CD4-positive, alpha-beta memory T cell (primary cell): ENCODE measurements at regions of chr1 and their contacts with region 1.

Region 1: DNA sequence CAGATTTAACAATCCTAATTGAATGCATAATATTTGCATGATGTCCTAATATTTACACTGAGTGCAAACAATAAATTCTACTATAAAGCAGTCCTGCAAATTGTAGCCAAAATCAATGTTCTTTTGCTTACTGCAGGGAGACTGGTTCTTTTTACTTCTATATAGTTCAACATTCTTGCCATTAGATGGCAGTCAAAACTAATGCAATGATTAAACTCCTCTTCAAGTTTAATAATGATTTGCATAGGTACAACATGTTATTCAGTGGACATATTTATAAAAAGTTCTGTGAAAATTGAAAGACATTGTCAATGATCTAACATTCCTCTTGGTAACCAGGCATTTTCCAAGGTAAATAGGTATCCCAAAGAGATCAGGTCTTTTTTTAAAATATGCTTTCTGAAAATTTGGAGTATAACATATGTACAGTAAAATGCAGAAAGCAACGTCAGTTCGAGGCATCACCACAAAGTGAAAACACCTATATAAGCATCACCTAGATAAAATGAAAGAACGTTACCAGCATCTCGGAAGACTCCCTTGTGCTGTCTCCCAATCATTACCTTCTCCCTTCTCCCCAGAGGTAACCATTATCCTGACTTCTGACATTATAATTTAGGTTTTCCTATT is 9.8 kb upstream of the FNBP1L start:
- DNase-seq: peak in 4 of 5 donors; percentile 33 to 44 (median 40)
- H3K4me3 ChIP-seq: no peak overlapping the region
- H3K4me3 Mint-ChIP-seq: peak overlapping the region in 1 of 8 donors; percentile 15
- H3K27ac ChIP-seq: no peak overlapping the region
- H3K27ac Mint-ChIP-seq: no peak overlapping the region
- H3K4me1 ChIP-seq: no peaks in the 10 kb centered on the region
- H3K4me1 Mint-ChIP-seq: peaks cover 0 to 7% (median 3%) of the 10 kb centered on the region in 4 donors
- H3K27me3 ChIP-seq: no peaks in the 10 kb centered on the region
- H3K27me3 Mint-ChIP-seq: peaks cover 4 to 7% of the 10 kb centered on the region in 2 donors

Region 2: DNA sequence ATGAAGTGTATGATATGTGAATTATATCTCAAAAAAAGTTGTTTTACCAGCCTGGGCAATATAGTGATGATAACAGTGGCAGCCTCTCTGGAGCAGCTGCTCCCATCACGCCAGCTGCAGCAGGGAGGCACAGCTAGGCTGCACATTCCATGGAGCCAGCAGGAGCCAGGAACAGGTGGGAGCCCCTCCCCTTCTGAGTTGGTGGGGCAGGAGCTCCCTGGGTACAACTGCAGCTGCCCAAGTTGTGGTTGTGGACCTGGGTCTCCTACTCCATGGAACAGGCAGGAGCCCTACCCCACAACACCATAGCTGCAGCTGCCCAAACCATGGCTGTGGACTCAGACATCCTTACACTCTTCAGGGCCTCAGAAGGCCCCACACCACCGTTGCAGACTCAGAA is 11.9 kb before region 1 on chr1:
- CTCF ChIA-PET with region 1: interaction called, 10 read pairs
- POLR2A ChIA-PET with region 1: no interaction called
- intact Hi-C with region 1: no loop called
- DNase-seq: no peak
- H3K4me3 ChIP-seq: no peak overlapping the region
- H3K4me3 Mint-ChIP-seq: no peak overlapping the region
- H3K27ac ChIP-seq: no peak overlapping the region
- H3K27ac Mint-ChIP-seq: no peak overlapping the region
- H3K4me1 ChIP-seq: no peaks in the 10 kb centered on the region
- H3K4me1 Mint-ChIP-seq: no peaks in the 10 kb centered on the region
- H3K27me3 ChIP-seq: no peaks in the 10 kb centered on the region
- H3K27me3 Mint-ChIP-seq: no peaks in the 10 kb centered on the region

Region 3: DNA sequence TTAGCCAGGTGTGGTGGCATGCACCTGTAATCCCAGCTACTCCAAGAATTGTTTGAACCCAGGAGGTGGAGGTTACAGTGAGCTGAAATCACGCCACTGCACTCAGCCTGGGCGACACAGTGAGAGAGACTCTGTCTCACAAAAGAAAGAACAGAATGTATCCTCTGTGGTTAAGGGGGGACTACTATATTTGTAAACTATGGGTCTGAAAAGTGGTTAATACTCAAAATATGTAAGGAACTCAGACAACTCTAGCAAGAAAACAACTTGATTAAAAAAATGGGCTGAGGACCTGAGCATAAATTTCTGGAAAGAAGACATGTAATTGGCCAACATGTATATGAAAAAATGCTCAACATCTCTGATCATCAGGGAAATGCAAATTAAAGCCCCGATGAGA is 21.0 kb after region 1 on chr1:
- CTCF ChIA-PET with region 1: no interaction called
- POLR2A ChIA-PET with region 1: no interaction called
- intact Hi-C with region 1: no loop called
- DNase-seq: no peak
- H3K4me3 ChIP-seq: no peak overlapping the region
- H3K4me3 Mint-ChIP-seq: no peak overlapping the region
- H3K27ac ChIP-seq: no peak overlapping the region
- H3K27ac Mint-ChIP-seq: no peak overlapping the region
- H3K4me1 ChIP-seq: no peaks in the 10 kb centered on the region
- H3K4me1 Mint-ChIP-seq: no peaks in the 10 kb centered on the region
- H3K27me3 ChIP-seq: no peaks in the 10 kb centered on the region
- H3K27me3 Mint-ChIP-seq: peaks cover 4 to 7% of the 10 kb centered on the region in 2 donors

Region 4: DNA sequence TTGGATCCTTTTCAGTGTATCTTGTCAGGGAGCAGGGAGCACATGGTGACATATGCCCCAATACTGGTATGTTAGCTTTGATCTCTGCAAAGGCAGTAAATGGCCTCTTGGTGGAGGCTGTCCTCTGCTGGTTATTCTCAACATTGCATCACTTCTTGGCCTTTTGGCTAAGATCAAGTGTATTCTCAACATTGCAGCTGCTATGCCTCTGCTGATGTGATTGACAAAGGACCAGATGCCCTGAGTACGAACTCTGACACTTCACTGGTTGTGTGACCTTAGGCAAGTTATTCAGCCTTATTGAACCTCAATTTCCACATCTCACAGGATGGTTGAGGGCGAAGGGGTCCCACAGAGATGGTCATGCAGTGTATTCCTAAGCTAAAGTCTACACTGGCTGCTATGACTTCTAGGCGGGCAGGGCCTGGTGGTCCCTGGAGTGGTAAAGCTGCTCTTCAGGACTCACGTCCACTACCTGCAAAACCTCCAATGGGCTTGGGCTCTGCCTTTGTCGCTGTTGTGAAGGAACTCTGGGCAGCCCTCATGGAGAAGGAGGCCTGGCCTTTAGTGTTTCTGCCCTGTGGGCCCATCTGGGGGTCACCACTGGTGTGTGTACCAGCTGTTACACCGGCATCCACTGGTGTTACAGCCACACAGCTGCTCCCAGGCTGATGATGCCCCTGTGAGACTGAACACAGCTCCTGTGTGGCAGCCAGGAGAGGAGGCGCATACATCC is 376.1 kb after region 1 on chr1:
- CTCF ChIA-PET with region 1: interaction called, 3 read pairs
- POLR2A ChIA-PET with region 1: no interaction called
- intact Hi-C with region 1: loop called (anchors 1 kb)
- DNase-seq: peak in 4 of 5 donors; percentile 33 to 51 (median 38)
- H3K4me3 ChIP-seq: no peak overlapping the region
- H3K4me3 Mint-ChIP-seq: no peak overlapping the region
- H3K27ac ChIP-seq: no peak overlapping the region
- H3K27ac Mint-ChIP-seq: no peak overlapping the region
- H3K4me1 ChIP-seq: peaks cover 20% of the 10 kb centered on the region
- H3K4me1 Mint-ChIP-seq: peaks cover 13 to 23% (median 17%) of the 10 kb centered on the region in 4 donors
- H3K27me3 ChIP-seq: no peaks in the 10 kb centered on the region
- H3K27me3 Mint-ChIP-seq: no peaks in the 10 kb centered on the region

Region 5: GRCh38 chr1:94039514-94039870 is 601.4 kb after region 1 on chr1:
- CTCF ChIA-PET with region 1: interaction called, 3 read pairs
- POLR2A ChIA-PET with region 1: no interaction called
- intact Hi-C with region 1: loop called (anchors 10 kb)
- DNase-seq: peak in 4 of 5 donors; percentile 22 to 37 (median 25)
- H3K4me3 ChIP-seq: no peak overlapping the region
- H3K4me3 Mint-ChIP-seq: no peak overlapping the region
- H3K27ac ChIP-seq: no peak overlapping the region
- H3K27ac Mint-ChIP-seq: no peak overlapping the region
- H3K4me1 ChIP-seq: no peaks in the 10 kb centered on the region
- H3K4me1 Mint-ChIP-seq: peaks cover 0 to 2% (median 0%) of the 10 kb centered on the region in 4 donors
- H3K27me3 ChIP-seq: no peaks in the 10 kb centered on the region
- H3K27me3 Mint-ChIP-seq: peaks cover 17 to 34% of the 10 kb centered on the region in 2 donors